ENCODE measurements at regions of chr6 and their contacts with region 1.

Region 1: GRCh38 chr6:147285087-147285855 is 81.1 kb downstream of the STXBP5 start:
- DNase-seq: no peak
- H3K4me3 Mint-ChIP-seq: no peak overlapping the region
- H3K27ac Mint-ChIP-seq: no peak overlapping the region
- H3K4me1 Mint-ChIP-seq: peaks cover 36% of the 10 kb centered on the region
- H3K27me3 Mint-ChIP-seq: no peaks in the 10 kb centered on the region

Region 2: GRCh38 chr6:146901940-146902816 is 383.1 kb before region 1 on chr6:
- CTCF ChIA-PET with region 1: no interaction called
- POLR2A ChIA-PET with region 1: no interaction called
- intact Hi-C with region 1: loop called (anchors 1 kb)
- DNase-seq: no peak
- H3K4me3 Mint-ChIP-seq: no peak overlapping the region
- H3K27ac Mint-ChIP-seq: no peak overlapping the region
- H3K4me1 Mint-ChIP-seq: no peaks in the 10 kb centered on the region
- H3K27me3 Mint-ChIP-seq: no peaks in the 10 kb centered on the region

Region 3: DNA sequence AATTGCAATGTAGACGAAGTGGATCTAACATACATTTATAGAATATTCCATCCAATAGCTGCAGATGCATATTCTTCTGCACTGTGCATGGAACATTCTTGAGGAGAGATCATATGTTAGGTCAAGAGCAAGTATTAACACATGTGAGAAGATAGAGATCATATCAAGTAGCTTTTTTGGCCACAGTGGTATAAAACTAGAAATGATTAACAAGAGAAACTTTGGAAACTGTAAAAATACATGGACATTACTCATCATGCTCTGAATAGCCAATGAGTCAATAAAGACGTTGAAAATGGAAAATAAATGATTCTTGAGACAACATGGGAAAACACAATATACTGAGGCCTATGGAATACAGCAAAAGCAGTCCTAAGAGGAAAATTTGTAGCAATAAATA is 13.2 kb after region 1 on chr6:
- CTCF ChIA-PET with region 1: interaction called, 3 read pairs
- POLR2A ChIA-PET with region 1: no interaction called
- intact Hi-C with region 1: loop called (anchors 2 kb)
- DNase-seq: no peak
- H3K4me3 Mint-ChIP-seq: no peak overlapping the region
- H3K27ac Mint-ChIP-seq: peak overlapping the region; percentile 7
- H3K4me1 Mint-ChIP-seq: peaks cover 23% of the 10 kb centered on the region
- H3K27me3 Mint-ChIP-seq: no peaks in the 10 kb centered on the region

Measured in activated CD4-positive, alpha-beta memory T cell treated with anti-CD3 and anti-CD28 coated beads for 36 hours (primary cell).